ENCODE measurements at regions of chr9 and their contacts with region 1.

Region 1: DNA sequence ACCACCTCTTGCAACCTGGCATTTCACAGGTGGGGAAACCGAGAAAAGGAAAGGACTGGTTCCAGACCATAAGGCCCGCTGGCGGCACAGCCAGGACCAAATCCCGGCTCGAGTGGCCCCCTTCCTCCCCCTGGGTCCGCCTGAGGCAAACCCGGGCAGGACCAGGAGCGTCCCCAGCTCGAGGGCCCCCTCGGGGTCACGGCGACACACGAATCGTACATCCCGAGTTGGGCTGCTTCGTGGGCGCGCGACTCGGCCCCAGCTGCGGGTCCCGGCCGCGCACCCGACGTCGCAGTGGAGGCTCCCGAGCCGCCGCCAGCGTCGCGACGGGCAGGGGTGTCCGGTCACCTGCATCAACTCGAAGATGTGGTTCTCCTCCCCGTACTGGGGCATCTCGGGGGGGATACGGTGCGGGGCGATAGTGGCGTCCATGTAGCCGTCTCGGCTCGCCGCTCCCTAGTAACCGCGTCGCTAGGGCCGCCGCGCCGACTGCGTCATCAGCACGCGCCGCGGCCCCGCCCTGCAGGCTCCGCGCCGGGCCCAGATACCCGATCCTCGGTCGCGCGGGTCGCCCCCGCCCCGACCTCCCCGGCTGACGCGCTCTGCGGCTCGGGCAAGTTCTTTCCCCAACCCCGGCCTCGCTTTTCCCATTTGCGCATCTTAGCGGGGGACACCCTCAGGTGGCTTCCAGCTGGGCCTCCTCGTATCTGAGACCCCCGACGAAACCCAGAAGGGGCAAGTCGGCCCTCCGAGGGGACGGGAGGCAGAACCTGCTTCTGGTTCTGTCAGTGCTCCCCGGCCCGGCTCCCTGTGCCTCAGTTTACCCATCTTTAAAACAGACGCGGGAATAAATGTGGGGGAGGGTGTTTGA is at the start of gene AK8:
- DNase-seq: peak; percentile 79
- H3K4me3 ChIP-seq: peak within 1 kb of the TSS; percentile 80
- H3K27ac ChIP-seq: peak within 1 kb of the TSS; percentile 69
- H3K4me1 ChIP-seq: no peaks in the 10 kb centered on the region
- H3K27me3 ChIP-seq: no peaks in the 10 kb centered on the region
- CTCF ChIP-seq: no peak
- total RNA-seq, gene AK8: 0.92 TPM in 1 of 2 replicates, not detected in the other

Region 2: GRCh38 chr9:131598121-131598520 is 1279.9 kb before region 1 on chr9:
- CTCF ChIA-PET with region 1: no interaction called
- POLR2A ChIA-PET with region 1: interaction called, 11 read pairs
- intact Hi-C with region 1: no loop called
- DNase-seq: no peak
- H3K4me3 ChIP-seq: no peak overlapping the region
- H3K27ac ChIP-seq: no peak overlapping the region
- H3K4me1 ChIP-seq: no peaks in the 10 kb centered on the region
- H3K27me3 ChIP-seq: no peaks in the 10 kb centered on the region
- CTCF ChIP-seq: no peak

Measured in A673 (cell line).